Ovary (tissue), 10 donors: ENCODE measurements at regions of chr6 and their contacts with region 1.

Region 1: GRCh38 chr6:157379656-157380454 is 1.1 kb upstream of the ZDHHC14 start:
- DNase-seq: peak; percentile 86 to 91 (median 89)
- H3K4me3 ChIP-seq: peak overlapping the region; percentile 78
- H3K27ac ChIP-seq: peak overlapping the region; percentile 83 to 93
- H3K4me1 ChIP-seq: peaks cover 4% of the 10 kb centered on the region
- H3K27me3 ChIP-seq: no peaks in the 10 kb centered on the region
- CTCF ChIP-seq: no peak
- EP300 ChIP-seq: no peak
- POLR2A ChIP-seq: no peak

Region 2: GRCh38 chr6:157148391-157149323 is 231.2 kb before region 1 on chr6:
- intact Hi-C with region 1: no loop called
- DNase-seq: peak in 1 of 5 donors; percentile 45
- H3K4me3 ChIP-seq: no peak overlapping the region
- H3K27ac ChIP-seq: no peak overlapping the region
- H3K4me1 ChIP-seq: peaks cover 25% of the 10 kb centered on the region
- H3K27me3 ChIP-seq: no peaks in the 10 kb centered on the region
- CTCF ChIP-seq: no peak
- EP300 ChIP-seq: no peak
- POLR2A ChIP-seq: no peak

Region 3: GRCh38 chr6:157434349-157435033 is 54.6 kb after region 1 on chr6:
- intact Hi-C with region 1: loop called in 1 of 4 experiments (anchors 5 kb)
- DNase-seq: peak; percentile 62 to 76 (median 67)
- H3K4me3 ChIP-seq: no peak overlapping the region
- H3K27ac ChIP-seq: peak overlapping the region in 1 of 2 donors; percentile 72
- H3K4me1 ChIP-seq: peaks cover 9% of the 10 kb centered on the region
- H3K27me3 ChIP-seq: no peaks in the 10 kb centered on the region
- CTCF ChIP-seq: no peak
- EP300 ChIP-seq: no peak
- POLR2A ChIP-seq: no peak